B cell (primary cell): ENCODE measurements at regions of chr6 and their contacts with region 1.

Region 1: GRCh38 chr6:90478789-90479602 is 107.9 kb downstream of the MAP3K7 start:
- DNase-seq: peak; percentile 88
- ATAC-seq: peak; percentile 95
- H3K4me3 ChIP-seq: peak overlapping the region in 1 of 5 experiments; percentile 25
- H3K4me3 Mint-ChIP-seq: peak overlapping the region; percentile 49
- H3K27ac ChIP-seq: no peak overlapping the region
- H3K27ac Mint-ChIP-seq: peak overlapping the region; percentile 51
- H3K4me1 ChIP-seq: peaks cover 11 to 13% of the 10 kb centered on the region in 2 donors
- H3K4me1 Mint-ChIP-seq: peaks cover 17% of the 10 kb centered on the region
- H3K27me3 ChIP-seq: no peaks in the 10 kb centered on the region
- H3K27me3 Mint-ChIP-seq: no peaks in the 10 kb centered on the region
- CTCF ChIP-seq: peak; percentile 94

Region 2: DNA sequence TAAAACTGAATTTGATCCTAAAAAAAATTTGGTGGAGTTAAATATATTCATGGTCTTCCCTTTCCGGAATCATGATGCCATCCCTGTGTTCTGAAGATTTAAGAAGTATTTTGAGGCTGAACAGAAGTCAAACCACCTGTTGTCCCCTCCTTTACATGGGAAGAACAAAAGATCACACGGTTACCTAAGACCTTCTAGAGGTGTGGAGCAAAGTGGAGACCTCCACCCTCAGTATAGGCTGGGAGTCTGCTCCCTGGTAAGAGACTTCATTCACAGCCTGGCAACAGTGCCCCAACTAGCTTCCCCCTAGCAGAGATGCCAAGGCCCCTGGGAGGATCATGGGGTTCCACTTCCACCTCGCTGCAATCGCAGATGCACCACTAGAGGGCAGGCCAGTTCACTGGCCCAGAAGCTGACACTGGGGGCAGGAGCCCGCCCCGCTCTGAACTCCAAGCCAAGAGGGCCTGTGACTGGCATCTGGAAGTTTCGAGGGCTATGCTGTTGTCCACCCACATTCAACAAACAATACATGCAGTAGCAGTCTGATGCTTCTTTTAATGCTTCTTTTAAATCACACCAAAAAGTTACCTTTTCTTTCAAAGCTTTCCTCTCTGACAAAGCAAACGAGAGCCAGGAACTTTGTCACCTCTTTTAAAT is 1107.0 kb before region 1 on chr6:
- CTCF ChIA-PET with region 1: interaction called, 4 read pairs
- POLR2A ChIA-PET with region 1: no interaction called
- intact Hi-C with region 1: loop called (anchors 1 kb)
- DNase-seq: peak; percentile 90
- ATAC-seq: peak; percentile 88
- H3K4me3 ChIP-seq: no peak overlapping the region
- H3K4me3 Mint-ChIP-seq: peak overlapping the region; percentile 18
- H3K27ac ChIP-seq: peak overlapping the region; percentile 17 to 18
- H3K27ac Mint-ChIP-seq: peak overlapping the region; percentile 53
- H3K4me1 ChIP-seq: peaks cover 23 to 37% of the 10 kb centered on the region in 2 donors
- H3K4me1 Mint-ChIP-seq: peaks cover 39% of the 10 kb centered on the region
- H3K27me3 ChIP-seq: no peaks in the 10 kb centered on the region
- H3K27me3 Mint-ChIP-seq: no peaks in the 10 kb centered on the region
- CTCF ChIP-seq: peak; percentile 98

Region 3: DNA sequence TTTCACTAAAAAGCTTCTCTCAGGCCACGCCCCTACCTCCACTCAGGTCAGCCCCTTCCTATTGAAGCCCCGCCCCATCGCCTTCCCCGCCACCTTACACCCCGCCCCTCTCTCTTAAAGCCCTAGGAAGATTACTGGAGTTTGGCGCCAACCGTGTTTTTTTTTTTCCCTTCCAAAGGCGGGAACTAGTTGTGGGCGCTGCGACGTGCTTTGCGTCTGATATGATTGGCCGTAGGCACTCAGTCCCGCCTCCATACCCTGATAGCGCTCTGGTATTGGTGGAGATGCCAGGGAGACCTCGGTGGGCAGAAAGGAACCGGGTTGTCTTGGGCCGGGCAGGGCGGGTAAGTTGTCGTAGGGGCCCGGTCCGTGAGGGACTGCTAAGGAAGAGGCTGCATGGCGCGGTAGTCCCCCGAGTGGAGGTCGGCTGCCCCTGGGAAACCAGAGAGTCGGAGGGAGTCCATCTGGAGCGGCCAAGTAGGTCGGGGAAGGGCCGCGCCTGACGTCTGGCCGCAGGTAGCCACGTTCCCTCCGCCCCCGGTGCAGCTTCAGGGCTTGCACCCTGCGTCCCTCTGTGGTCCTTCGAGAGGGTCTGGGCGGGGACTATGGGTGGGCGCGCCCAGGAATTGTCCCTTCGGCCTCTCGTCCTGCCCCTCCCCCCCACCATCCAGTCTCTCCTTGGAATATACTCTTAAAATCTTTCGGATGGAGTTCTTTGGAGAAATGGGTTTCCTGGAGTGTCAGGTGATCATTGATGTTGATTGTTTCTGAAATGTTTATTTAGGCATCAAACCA is 649.2 kb before region 1 on chr6 and contains the start of gene CASP8AP2:
- CTCF ChIA-PET with region 1: interaction called, 6 read pairs
- POLR2A ChIA-PET with region 1: no interaction called
- intact Hi-C with region 1: loop called (anchors 10 kb)
- DNase-seq: peak; percentile 98
- ATAC-seq: peak; percentile 93
- H3K4me3 ChIP-seq: peak within 1 kb of the TSS; percentile 75 to 97 (median 79)
- H3K4me3 Mint-ChIP-seq: peak within 1 kb of the TSS; percentile 99
- H3K27ac ChIP-seq: peak within 1 kb of the TSS; percentile 62 to 83
- H3K27ac Mint-ChIP-seq: peak within 1 kb of the TSS; percentile 95
- H3K4me1 ChIP-seq: peaks cover 14 to 28% of the 10 kb centered on the region in 2 donors
- H3K4me1 Mint-ChIP-seq: peaks cover 29% of the 10 kb centered on the region
- H3K27me3 ChIP-seq: no peaks in the 10 kb centered on the region
- H3K27me3 Mint-ChIP-seq: no peaks in the 10 kb centered on the region
- CTCF ChIP-seq: no peak
- total RNA-seq, gene CASP8AP2: 30.6 and 32.1 TPM in 2 replicates

Region 4: DNA sequence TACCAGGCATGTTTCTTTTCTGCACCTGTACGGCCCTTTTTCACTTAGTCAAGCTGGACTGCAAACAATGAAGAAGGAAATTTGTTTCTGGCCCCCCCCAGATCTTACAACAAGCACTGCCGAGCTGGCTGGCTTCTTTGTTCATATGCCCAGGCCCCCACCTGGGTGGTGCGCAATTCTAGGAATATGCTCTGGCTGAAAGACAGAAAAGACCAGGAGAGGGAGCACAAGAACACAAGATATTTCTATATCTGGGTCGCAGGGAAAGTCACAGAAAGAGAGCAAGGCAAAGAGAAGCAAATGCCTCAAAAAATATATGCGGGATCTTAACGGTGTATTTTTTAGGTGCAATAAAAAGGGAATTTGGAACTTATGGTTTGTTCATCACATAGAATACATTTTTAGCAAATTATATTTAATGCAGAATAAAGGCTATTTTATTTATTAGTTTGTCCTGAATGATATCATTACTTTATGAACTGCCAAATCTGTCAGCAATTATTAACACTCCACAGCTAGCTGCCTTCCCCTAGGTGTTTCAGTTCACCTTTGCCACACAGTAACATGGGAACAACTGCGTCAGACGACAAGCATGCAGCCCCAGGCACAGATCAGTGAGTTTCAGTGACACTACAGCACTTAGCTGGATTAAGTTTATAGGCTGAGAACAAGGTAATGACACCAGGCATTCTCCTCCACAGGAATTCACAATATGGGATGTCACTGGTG is 508.2 kb before region 1 on chr6:
- CTCF ChIA-PET with region 1: interaction called, 14 read pairs
- POLR2A ChIA-PET with region 1: no interaction called
- intact Hi-C with region 1: loop called (anchors 1 kb)
- DNase-seq: peak; percentile 33
- ATAC-seq: no peak
- H3K4me3 ChIP-seq: no peak overlapping the region
- H3K4me3 Mint-ChIP-seq: no peak overlapping the region
- H3K27ac ChIP-seq: peak overlapping the region in 1 of 2 donors; percentile 33
- H3K27ac Mint-ChIP-seq: no peak overlapping the region
- H3K4me1 ChIP-seq: no peaks in the 10 kb centered on the region
- H3K4me1 Mint-ChIP-seq: peaks cover 17% of the 10 kb centered on the region
- H3K27me3 ChIP-seq: no peaks in the 10 kb centered on the region
- H3K27me3 Mint-ChIP-seq: no peaks in the 10 kb centered on the region
- CTCF ChIP-seq: no peak

Region 5: DNA sequence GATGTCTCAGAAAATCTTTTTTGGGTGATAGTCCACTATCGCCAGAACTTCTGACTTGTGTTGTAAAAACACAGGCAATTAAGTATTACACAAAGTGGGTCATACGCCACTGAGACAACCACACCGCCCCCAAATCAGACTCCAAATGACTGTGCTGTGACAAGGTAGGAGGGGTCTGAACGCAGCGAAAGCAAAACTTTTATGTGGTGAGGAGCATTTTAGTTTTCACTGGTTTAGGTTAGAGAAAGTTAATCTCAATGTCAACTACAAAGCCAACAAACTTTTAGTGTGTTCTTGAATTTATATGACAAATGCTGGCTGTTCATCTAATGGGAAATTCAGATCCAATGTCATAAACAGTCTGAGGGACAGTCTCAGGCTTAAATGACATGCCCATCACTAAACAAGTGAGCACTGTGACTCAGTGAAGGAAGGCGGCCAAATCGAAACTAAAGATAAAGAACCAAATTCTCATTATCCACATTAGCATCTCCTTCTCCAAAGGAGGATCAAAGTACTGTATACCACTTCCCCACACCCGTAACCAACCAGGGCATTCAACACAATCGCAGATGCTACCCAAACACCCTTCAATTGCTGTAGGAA is 398.0 kb before region 1 on chr6:
- CTCF ChIA-PET with region 1: interaction called, 6 read pairs
- POLR2A ChIA-PET with region 1: no interaction called
- intact Hi-C with region 1: loop called (anchors 5 kb)
- DNase-seq: peak; percentile 54
- ATAC-seq: peak; percentile 48
- H3K4me3 ChIP-seq: peak overlapping the region in 4 of 5 experiments; percentile 11 to 48 (median 40)
- H3K4me3 Mint-ChIP-seq: peak overlapping the region; percentile 90
- H3K27ac ChIP-seq: peak overlapping the region; percentile 4 to 52
- H3K27ac Mint-ChIP-seq: peak overlapping the region; percentile 90
- H3K4me1 ChIP-seq: peaks cover 61 to 72% of the 10 kb centered on the region in 2 donors
- H3K4me1 Mint-ChIP-seq: peaks cover 92% of the 10 kb centered on the region
- H3K27me3 ChIP-seq: no peaks in the 10 kb centered on the region
- H3K27me3 Mint-ChIP-seq: no peaks in the 10 kb centered on the region
- CTCF ChIP-seq: no peak

Region 6: DNA sequence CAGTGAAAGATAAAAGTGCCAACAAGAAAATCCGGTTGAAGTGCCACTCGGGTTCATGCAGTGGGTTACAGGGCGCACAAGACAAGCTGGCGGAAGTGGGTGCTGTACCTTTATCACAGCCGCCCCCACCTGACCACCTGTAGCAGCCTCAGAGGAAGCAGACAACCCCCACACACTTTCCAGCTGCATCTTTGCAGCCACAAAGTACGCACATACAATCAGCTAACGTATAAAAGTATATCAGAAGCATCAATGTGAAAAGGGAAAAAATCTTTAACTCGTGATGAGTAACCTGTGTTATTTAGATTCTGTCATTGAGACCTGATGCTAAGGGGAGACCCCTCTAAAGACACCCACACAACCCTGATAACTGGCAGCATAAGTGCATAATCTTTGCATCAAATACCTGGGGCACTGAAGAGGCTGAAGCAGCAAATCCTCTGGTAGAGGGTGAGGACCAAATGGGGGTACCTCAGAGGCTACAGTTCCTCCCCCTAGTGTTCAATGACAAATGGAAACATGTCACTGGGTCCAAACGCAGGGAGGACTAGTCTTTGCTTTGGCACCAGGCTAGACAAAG is 204.5 kb before region 1 on chr6:
- CTCF ChIA-PET with region 1: interaction called, 15 read pairs
- POLR2A ChIA-PET with region 1: no interaction called
- intact Hi-C with region 1: loop called (anchors 5 kb)
- DNase-seq: peak; percentile 94
- ATAC-seq: peak; percentile 92
- H3K4me3 ChIP-seq: peak overlapping the region in 1 of 5 experiments; percentile 11
- H3K4me3 Mint-ChIP-seq: peak overlapping the region; percentile 59
- H3K27ac ChIP-seq: peak overlapping the region; percentile 95 to 97
- H3K27ac Mint-ChIP-seq: peak overlapping the region; percentile 87
- H3K4me1 ChIP-seq: peaks cover 55 to 75% of the 10 kb centered on the region in 2 donors
- H3K4me1 Mint-ChIP-seq: peaks cover 84% of the 10 kb centered on the region
- H3K27me3 ChIP-seq: no peaks in the 10 kb centered on the region
- H3K27me3 Mint-ChIP-seq: no peaks in the 10 kb centered on the region
- CTCF ChIP-seq: peak; percentile 34

Region 7: DNA sequence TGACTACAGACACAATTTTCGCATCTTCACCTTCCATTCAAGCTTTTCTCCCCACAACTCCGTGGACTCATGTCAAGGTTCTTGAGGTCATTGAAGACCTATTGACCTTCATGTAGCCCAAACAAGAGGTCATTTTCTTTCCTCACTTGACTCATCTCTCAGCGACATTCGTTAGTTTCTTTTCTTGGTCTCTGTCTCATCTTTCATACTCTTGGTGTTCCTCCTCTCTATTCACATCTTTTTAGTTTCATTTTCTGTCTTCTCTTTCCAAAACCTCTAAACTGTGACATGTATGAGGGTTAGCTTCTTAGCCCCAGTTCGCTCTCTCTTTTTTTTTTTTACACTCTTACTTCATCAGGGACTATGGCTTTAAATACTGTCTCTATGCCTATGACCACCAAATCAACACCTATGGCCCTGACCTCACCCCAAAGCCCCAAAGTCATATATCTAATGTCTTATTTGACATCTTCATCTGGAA is 53.8 kb before region 1 on chr6:
- CTCF ChIA-PET with region 1: interaction called, 5 read pairs
- POLR2A ChIA-PET with region 1: no interaction called
- intact Hi-C with region 1: loop called (anchors 5 kb)
- DNase-seq: peak; percentile 58
- ATAC-seq: peak; percentile 91
- H3K4me3 ChIP-seq: peak overlapping the region in 3 of 5 experiments; percentile 33 to 54 (median 38)
- H3K4me3 Mint-ChIP-seq: peak overlapping the region; percentile 76
- H3K27ac ChIP-seq: peak overlapping the region; percentile 42 to 78
- H3K27ac Mint-ChIP-seq: peak overlapping the region; percentile 70
- H3K4me1 ChIP-seq: peaks cover 12 to 14% of the 10 kb centered on the region in 2 donors
- H3K4me1 Mint-ChIP-seq: peaks cover 17% of the 10 kb centered on the region
- H3K27me3 ChIP-seq: no peaks in the 10 kb centered on the region
- H3K27me3 Mint-ChIP-seq: no peaks in the 10 kb centered on the region
- CTCF ChIP-seq: no peak

Region 8: DNA sequence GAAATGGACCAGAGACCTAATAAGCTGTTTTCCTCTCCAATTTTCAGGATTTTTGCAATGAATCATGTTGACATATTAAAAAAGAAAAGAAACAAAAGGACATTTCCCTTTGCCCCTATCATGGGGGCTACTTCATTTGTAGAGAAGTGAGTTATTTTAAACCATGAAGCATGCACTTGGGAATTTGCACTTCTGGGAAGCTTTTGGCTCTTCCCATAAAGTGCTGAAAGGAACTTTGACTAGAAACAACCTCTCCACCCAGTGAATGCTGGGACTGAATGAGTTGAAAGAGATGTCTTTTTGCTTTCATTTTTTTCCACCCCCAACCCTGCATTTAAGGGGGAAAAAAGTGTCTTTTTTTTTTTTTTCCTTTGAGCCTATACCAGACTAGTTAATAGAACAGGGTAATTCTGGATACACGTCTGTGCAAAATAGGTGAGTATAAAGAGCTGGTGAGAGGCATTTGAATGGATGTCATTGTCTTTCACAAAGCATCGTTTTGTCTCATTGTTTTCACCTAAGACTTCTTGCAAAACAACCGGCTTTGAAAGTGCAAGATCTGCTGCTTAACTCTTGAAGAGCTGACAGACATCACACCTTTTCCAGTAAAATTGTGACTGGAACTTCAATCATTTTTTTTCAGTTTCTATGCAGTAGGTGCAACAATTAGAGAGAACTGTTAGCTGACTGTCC is 43.6 kb before region 1 on chr6:
- CTCF ChIA-PET with region 1: no interaction called
- POLR2A ChIA-PET with region 1: no interaction called
- intact Hi-C with region 1: no loop called
- DNase-seq: no peak
- ATAC-seq: no peak
- H3K4me3 ChIP-seq: no peak overlapping the region
- H3K4me3 Mint-ChIP-seq: no peak overlapping the region
- H3K27ac ChIP-seq: no peak overlapping the region
- H3K27ac Mint-ChIP-seq: no peak overlapping the region
- H3K4me1 ChIP-seq: no peaks in the 10 kb centered on the region
- H3K4me1 Mint-ChIP-seq: no peaks in the 10 kb centered on the region
- H3K27me3 ChIP-seq: no peaks in the 10 kb centered on the region
- H3K27me3 Mint-ChIP-seq: peaks cover 3% of the 10 kb centered on the region
- CTCF ChIP-seq: no peak